SK-N-SH (cell line): ENCODE measurements at regions of chr4 and their contacts with region 1.

Region 1: GRCh38 chr4:17347445-17347844 is 164.4 kb downstream of the QDPR start:
- DNase-seq: peak; percentile 46
- H3K4me3 ChIP-seq: peak overlapping the region in 1 of 2 experiments; percentile 31; a peak in 1 of 4 replicates
- H3K27ac ChIP-seq: no peak overlapping the region
- H3K4me1 ChIP-seq: no peaks in the 10 kb centered on the region
- H3K27me3 ChIP-seq: no peaks in the 10 kb centered on the region
- CTCF ChIP-seq: peak; percentile 66
- EP300 ChIP-seq: no peak
- RAD21 ChIP-seq: peak; percentile 73

Region 2: GRCh38 chr4:17336524-17336961 is 10.9 kb before region 1 on chr4:
- CTCF ChIA-PET with region 1: interaction called, 11 read pairs
- POLR2A ChIA-PET with region 1: no interaction called
- DNase-seq: no peak
- H3K4me3 ChIP-seq: no peak overlapping the region
- H3K27ac ChIP-seq: no peak overlapping the region
- H3K4me1 ChIP-seq: no peaks in the 10 kb centered on the region
- H3K27me3 ChIP-seq: no peaks in the 10 kb centered on the region; the same call in 1 of the 2 replicates
- CTCF ChIP-seq: no peak
- EP300 ChIP-seq: no peak
- RAD21 ChIP-seq: no peak

Region 3: GRCh38 chr4:17366496-17366895 is 19.1 kb after region 1 on chr4:
- CTCF ChIA-PET with region 1: interaction called, 39 read pairs
- POLR2A ChIA-PET with region 1: no interaction called
- DNase-seq: no peak
- H3K4me3 ChIP-seq: no peak overlapping the region
- H3K27ac ChIP-seq: no peak overlapping the region
- H3K4me1 ChIP-seq: no peaks in the 10 kb centered on the region
- H3K27me3 ChIP-seq: peaks cover 6% of the 10 kb centered on the region
- CTCF ChIP-seq: no peak
- EP300 ChIP-seq: no peak
- RAD21 ChIP-seq: no peak

Region 4: GRCh38 chr4:17468371-17469221 is 121.2 kb after region 1 on chr4:
- CTCF ChIA-PET with region 1: interaction called, 20 read pairs
- POLR2A ChIA-PET with region 1: no interaction called
- DNase-seq: peak; percentile 33
- H3K4me3 ChIP-seq: no peak overlapping the region
- H3K27ac ChIP-seq: no peak overlapping the region
- H3K4me1 ChIP-seq: no peaks in the 10 kb centered on the region; a peak in 1 of 4 replicates
- H3K27me3 ChIP-seq: no peaks in the 10 kb centered on the region
- CTCF ChIP-seq: peak; percentile 51
- EP300 ChIP-seq: no peak
- RAD21 ChIP-seq: peak; percentile 50